ENCODE measurements at regions of chr5 and their contacts with region 1.

Region 1: GRCh38 chr5:140073296-140073695 is 30.2 kb upstream of the NRG2 start:
- DNase-seq: no peak
- H3K4me3 ChIP-seq: no peak overlapping the region
- H3K27me3 ChIP-seq: peaks cover 3% of the 10 kb centered on the region
- CTCF ChIP-seq: 0 out of 2 replicates have a peak, but pooled peaks have one; percentile 32

Region 2: DNA sequence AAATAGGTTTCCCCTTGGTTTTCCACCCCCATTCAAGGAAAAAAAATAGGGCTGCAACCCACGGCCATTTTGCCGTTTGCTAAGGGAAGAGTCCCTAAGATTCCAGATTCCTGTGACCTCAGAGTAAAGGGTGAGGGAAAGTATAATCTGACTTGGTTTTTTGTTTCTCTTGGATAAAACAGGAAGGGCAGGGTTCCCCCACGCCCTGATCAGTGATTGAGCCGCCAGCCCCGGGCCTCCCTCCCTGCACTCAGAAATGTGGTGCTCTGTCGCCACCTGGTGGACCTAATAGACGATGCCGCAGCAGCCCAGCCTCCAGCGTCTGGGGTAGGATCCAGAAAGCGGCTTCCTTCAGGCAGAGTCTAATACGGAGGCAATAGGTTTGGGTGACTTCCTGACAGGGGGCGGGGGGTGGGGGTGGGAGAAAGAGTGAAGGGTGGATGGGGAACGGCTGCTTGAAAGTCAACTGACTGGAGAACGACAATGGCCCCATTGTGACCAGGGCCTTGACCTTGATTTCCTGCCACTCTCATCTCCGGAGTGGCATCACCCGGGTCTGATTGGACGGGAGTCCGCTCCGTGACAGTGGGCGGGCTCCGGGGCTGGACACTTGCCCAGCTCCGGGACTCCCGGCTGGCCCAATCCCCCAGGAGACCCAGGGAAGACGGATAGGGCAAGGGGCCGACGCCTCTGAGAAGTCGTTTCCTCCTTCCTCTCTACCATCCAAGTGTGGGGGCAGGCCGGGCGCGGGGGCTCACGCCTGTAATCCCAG is 83.9 kb after region 1 on chr5:
- CTCF ChIA-PET with region 1: interaction called, 106 read pairs
- POLR2A ChIA-PET with region 1: interaction called, 3 read pairs
- DNase-seq: no peak
- H3K4me3 ChIP-seq: peak overlapping the region; percentile 35
- H3K27me3 ChIP-seq: no peaks in the 10 kb centered on the region
- CTCF ChIP-seq: peak; percentile 92

Region 3: GRCh38 chr5:140202078-140202477 is 128.8 kb after region 1 on chr5:
- CTCF ChIA-PET with region 1: no interaction called
- POLR2A ChIA-PET with region 1: interaction called, 21 read pairs
- DNase-seq: no peak
- H3K4me3 ChIP-seq: no peak overlapping the region
- H3K27me3 ChIP-seq: no peaks in the 10 kb centered on the region
- CTCF ChIP-seq: no peak

Region 4: GRCh38 chr5:140630296-140631035 is 557.2 kb after region 1 on chr5:
- CTCF ChIA-PET with region 1: no interaction called
- POLR2A ChIA-PET with region 1: no interaction called
- DNase-seq: no peak
- H3K4me3 ChIP-seq: no peak overlapping the region
- H3K27me3 ChIP-seq: no peaks in the 10 kb centered on the region
- CTCF ChIP-seq: no peak